ENCODE measurements at regions of chr6 and their contacts with region 1.

Region 1: GRCh38 chr6:142946181-142946923 is 1.4 kb upstream of the HIVEP2 start:
- DNase-seq: peak; percentile 97 to 99
- ATAC-seq: peak; percentile 81 to 93 (median 86)
- H3K4me3 ChIP-seq: peak overlapping the region; percentile 59 to 94 (median 90)
- H3K27ac ChIP-seq: peak overlapping the region; percentile 90 to 100 (median 99)
- H3K4me1 ChIP-seq: peaks cover 0 to 37% (median 23%) of the 10 kb centered on the region in 9 donors
- H3K27me3 ChIP-seq: no peaks in the 10 kb centered on the region
- CTCF ChIP-seq: no peak

Region 2: DNA sequence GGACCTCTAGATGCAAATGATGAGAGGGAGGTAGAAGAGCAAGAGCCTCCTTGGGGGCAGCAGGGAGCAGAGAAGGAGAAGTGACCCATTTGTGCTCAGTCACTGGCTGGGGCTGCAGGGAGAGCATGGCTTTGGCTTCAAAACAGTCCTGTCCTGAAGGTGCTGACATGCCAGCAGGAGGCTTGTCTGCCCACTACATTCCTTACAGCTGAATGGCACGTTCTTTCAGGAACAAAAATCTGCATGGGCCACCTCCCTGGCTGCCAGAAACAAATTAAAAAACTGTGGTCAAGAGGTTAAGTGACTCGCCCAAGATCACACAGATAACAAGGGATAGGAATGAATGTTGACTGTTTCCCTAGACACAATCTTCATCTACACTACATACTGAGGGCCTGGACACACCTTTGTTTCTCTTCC is 190.1 kb before region 1 on chr6:
- intact Hi-C with region 1: loop called in 4 of 10 experiments (anchors 5 to 10 kb)
- DNase-seq: no peak
- ATAC-seq: peak in 5 of 8 donors; percentile 62 to 72 (median 69)
- H3K4me3 ChIP-seq: no peak overlapping the region
- H3K27ac ChIP-seq: no peak overlapping the region
- H3K4me1 ChIP-seq: peaks cover 0 to 19% (median 0%) of the 10 kb centered on the region in 9 donors
- H3K27me3 ChIP-seq: no peaks in the 10 kb centered on the region
- CTCF ChIP-seq: peak in 1 of 9 donors; percentile 9

Region 3: GRCh38 chr6:142784344-142784743 is 162.0 kb before region 1 on chr6:
- intact Hi-C with region 1: no loop called
- DNase-seq: no peak
- ATAC-seq: peak in 3 of 8 donors; percentile 33 to 74 (median 58)
- H3K4me3 ChIP-seq: no peak overlapping the region
- H3K27ac ChIP-seq: no peak overlapping the region
- H3K4me1 ChIP-seq: peaks cover 0 to 24% (median 0%) of the 10 kb centered on the region in 9 donors
- H3K27me3 ChIP-seq: no peaks in the 10 kb centered on the region
- CTCF ChIP-seq: no peak

Region 4: DNA sequence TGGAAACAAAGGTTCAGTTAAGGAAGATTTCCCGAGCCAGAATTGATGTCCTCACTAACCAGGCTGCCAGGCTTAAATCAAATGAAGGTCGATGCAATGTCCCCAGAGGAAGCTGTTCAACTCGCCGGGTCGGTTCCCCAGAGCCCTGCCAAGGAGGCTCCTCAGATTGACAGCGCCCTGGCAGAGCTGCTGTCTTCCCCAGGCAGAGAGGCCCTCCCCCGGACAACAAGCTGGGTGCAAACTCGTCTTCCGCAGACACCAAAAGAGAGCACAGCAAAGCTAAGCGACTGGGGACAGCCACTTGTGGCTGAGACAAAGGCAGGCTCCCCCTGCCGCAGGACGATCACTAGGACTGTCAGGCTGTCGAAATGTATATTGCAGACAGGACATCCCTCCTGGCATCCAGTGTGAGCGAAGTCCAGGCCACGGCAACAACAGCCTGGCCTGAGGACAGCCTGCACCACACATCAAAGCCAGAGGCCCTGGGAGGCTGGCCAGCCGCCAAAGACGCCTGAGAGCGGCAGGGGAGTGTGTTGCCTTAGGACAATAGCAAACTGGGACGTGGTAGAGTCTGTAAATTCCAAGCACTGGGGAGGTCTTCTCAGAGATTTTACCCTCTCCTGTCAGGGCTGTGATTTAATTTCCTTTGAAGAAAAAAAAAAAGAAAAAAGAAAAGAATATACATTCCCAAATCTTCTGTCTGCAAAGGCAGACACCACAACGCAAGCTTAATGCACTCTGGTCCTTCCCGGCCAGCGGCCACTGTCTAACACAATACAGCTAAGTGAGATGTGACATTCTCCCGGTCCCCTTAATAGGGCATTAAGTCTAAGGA is 100.5 kb before region 1 on chr6:
- intact Hi-C with region 1: loop called in 5 of 10 experiments (anchors 2 to 10 kb)
- DNase-seq: peak; percentile 92 to 93
- ATAC-seq: peak; percentile 91 to 97 (median 94)
- H3K4me3 ChIP-seq: peak overlapping the region in 9 of 10 donors; percentile 1 to 51 (median 37)
- H3K27ac ChIP-seq: peak overlapping the region; percentile 69 to 92 (median 80)
- H3K4me1 ChIP-seq: peaks cover 25 to 98% (median 88%) of the 10 kb centered on the region in 9 donors
- H3K27me3 ChIP-seq: no peaks in the 10 kb centered on the region
- CTCF ChIP-seq: peak in 2 of 9 donors; percentile 26 to 38

Region 5: DNA sequence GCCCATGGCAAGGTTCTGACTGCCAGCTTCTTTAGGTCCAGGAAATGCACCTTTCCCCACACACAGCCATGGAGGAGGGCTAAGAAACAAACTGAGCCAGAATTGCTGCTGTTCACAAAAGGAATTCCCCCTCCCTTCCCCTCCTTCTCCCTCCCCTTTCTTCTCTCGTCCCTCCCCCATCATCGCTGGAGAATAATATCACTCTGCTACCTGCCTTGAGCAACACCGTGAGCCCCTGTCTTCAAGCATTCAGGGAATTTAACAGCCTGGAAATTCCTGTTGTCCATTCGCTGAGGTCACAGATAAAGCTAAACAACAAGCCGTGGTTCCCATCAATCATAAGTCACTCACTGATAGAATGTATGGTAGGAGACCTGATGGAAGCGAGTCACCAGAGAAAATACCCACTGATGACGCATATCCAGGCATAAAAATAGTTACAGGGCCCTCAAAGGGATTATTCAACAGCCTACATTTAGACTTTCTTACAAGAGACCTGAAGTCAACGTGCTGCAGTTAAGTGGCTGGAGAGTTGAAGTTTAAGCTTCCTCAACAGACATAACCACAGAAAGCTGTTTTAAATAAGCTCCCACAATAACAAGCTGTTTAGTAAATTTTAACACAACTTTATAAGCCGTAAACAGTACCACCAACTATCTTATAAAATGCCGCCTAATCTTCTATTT is 61.0 kb before region 1 on chr6:
- intact Hi-C with region 1: loop called in 7 of 10 experiments (anchors 5 to 10 kb)
- DNase-seq: peak in 1 of 2 donors; percentile 61
- ATAC-seq: peak; percentile 89 to 97 (median 94)
- H3K4me3 ChIP-seq: peak overlapping the region in 9 of 10 donors; percentile 23 to 54 (median 45)
- H3K27ac ChIP-seq: peak overlapping the region; percentile 31 to 81 (median 70)
- H3K4me1 ChIP-seq: peaks cover 0 to 61% (median 47%) of the 10 kb centered on the region in 9 donors
- H3K27me3 ChIP-seq: no peaks in the 10 kb centered on the region
- CTCF ChIP-seq: no peak

Region 6: DNA sequence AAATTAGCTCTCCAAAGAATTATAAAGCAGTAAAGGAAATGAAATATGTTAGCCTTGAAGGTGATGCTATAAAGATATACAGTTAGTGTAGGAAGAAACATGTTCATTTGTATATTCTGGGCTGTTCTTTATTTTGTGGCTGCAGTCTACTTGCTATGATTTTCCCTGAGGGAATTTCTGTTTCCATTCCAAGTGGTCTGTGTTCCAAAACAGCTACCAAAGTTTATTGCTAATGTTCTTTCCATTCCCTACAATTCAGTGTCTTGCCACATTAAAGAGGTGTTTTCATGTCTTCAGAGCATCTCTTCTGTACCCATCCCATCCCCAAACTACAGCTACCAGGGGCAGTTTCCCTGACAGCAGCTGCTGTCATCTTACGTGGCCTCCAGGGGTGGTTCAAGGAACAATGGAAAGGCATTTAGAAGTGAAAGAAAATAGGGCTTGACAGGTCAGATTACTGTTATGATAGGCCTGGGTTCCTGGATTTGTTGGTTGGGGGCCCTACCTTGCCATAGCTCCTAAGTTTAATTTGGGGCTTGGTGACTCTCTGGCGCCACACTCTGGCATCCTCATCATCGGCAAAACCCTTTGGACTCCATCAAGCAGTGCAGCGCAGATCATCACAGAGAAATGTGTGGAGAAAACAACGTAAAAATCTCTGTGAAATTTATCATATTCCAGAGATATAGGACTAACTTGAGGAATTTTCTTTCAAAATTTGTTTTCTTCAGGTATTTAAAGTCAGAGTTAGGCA is 80.5 kb after region 1 on chr6:
- intact Hi-C with region 1: loop called in 3 of 10 experiments (anchors 5 kb)
- DNase-seq: peak; percentile 26 to 27
- ATAC-seq: peak in 6 of 8 donors; percentile 55 to 78 (median 60)
- H3K4me3 ChIP-seq: no peak overlapping the region
- H3K27ac ChIP-seq: no peak overlapping the region
- H3K4me1 ChIP-seq: no peaks in the 10 kb centered on the region
- H3K27me3 ChIP-seq: no peaks in the 10 kb centered on the region
- CTCF ChIP-seq: peak; percentile 47 to 78 (median 70)

Region 7: DNA sequence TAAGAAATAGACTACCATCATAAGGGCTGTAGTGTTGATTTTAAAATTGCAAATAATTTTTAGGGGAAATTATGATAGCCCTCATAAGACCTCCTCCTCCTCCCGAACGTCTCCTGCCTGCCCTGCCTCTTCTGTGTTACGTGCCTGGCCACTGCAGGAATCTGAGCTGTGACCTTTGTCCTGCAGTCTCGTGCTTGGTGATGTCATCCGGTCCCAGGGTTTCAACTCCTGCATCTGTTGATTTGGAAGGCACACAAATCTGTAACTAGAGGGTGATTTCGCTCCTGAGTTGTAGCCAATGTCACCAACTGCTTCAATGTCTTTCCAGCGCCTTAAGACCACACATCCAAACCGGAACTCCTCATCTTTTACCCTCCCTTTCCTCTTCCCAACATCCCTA is 277.5 kb after region 1 on chr6:
- intact Hi-C with region 1: loop called in 1 of 10 experiments (anchors 5 kb)
- DNase-seq: peak; percentile 57 to 70
- ATAC-seq: peak; percentile 69 to 89 (median 76)
- H3K4me3 ChIP-seq: no peak overlapping the region
- H3K27ac ChIP-seq: peak overlapping the region; percentile 45 to 87 (median 74)
- H3K4me1 ChIP-seq: peaks cover 13 to 39% (median 34%) of the 10 kb centered on the region in 9 donors
- H3K27me3 ChIP-seq: no peaks in the 10 kb centered on the region
- CTCF ChIP-seq: no peak